H1 (cell line): ENCODE measurements at regions of chr11 and their contacts with region 1.

Region 1: DNA sequence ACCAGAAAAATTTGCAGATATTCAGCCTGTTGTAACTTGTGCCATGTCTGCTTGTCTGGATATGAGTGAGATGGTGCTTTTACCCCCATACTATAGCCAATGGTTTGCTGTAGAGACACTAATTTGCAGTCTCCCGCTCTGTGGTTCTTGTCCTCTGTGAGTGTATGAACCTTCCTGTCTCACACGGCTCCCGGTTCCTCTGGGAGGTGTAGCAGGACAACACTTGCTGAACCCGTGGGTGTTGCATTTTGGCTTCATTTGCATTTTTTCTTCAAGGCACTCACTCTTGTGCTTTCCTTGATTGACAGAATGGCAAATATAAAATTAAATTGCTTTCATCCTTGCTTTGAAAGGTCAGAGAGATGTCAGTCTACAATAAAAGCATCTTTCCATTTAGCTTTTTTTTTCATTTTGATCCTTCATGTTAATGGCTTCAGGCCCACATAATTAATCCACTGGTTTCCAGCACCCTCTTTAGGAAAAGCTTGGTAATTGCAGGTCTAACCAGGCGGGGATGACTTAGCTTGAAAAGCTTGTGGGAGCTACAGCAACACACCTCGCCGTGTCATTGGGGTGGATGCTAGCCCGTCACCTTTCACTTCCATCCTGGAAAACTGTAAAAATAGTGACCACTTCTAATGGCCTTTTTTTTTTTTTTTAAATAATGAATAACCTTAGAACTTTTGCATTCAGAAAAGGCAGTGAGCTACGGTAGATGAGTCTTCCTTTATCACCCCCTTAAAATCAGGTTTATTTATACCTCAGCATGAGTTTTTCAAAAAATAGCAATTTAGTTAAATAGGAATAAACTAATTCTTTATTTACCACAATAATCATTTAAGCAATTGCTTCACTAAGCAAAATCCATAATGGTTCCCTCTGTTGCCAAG is 27.4 kb upstream of the ST14 start:
- DNase-seq: peak; percentile 17 to 63
- H3K4me3 ChIP-seq: 0 out of 8 replicates have a peak overlapping the region, but pooled peaks of 1 of the 4 experiments have one; percentile 19
- H3K27ac ChIP-seq: no peak overlapping the region
- H3K4me1 ChIP-seq: no peaks in the 10 kb centered on the region
- H3K27me3 ChIP-seq: no peaks in the 10 kb centered on the region
- CTCF ChIP-seq: peak; percentile 19 to 83 (median 72)
- EP300 ChIP-seq: no peak
- POLR2A ChIP-seq: no peak
- RAD21 ChIP-seq: peak; percentile 91

Region 2: GRCh38 chr11:129922674-129923073 is 209.5 kb before region 1 on chr11:
- CTCF ChIA-PET with region 1: interaction called, 64 read pairs
- POLR2A ChIA-PET with region 1: no interaction called
- DNase-seq: no peak
- H3K4me3 ChIP-seq: no peak overlapping the region
- H3K27ac ChIP-seq: no peak overlapping the region
- H3K4me1 ChIP-seq: peaks cover 0 to 4% (median 2%) of the 10 kb centered on the region in 4 experiments; a peak in 2 of 7 replicates
- H3K27me3 ChIP-seq: no peaks in the 10 kb centered on the region
- CTCF ChIP-seq: no peak
- EP300 ChIP-seq: no peak
- POLR2A ChIP-seq: no peak
- RAD21 ChIP-seq: no peak

Region 3: GRCh38 chr11:129937592-129938238 is 194.5 kb before region 1 on chr11:
- CTCF ChIA-PET with region 1: interaction called, 15 read pairs
- POLR2A ChIA-PET with region 1: no interaction called
- DNase-seq: no peak
- H3K4me3 ChIP-seq: no peak overlapping the region
- H3K27ac ChIP-seq: no peak overlapping the region
- H3K4me1 ChIP-seq: peaks cover 0 to 11% (median 6%) of the 10 kb centered on the region in 4 experiments; a peak in 6 of 7 replicates
- H3K27me3 ChIP-seq: no peaks in the 10 kb centered on the region
- CTCF ChIP-seq: no peak
- EP300 ChIP-seq: no peak
- POLR2A ChIP-seq: no peak
- RAD21 ChIP-seq: no peak

Region 4: GRCh38 chr11:129992161-129992944 is 139.9 kb before region 1 on chr11:
- CTCF ChIA-PET with region 1: interaction called, 32 read pairs
- POLR2A ChIA-PET with region 1: interaction called, 3 read pairs
- DNase-seq: peak in 1 of 2 experiments; percentile 56
- H3K4me3 ChIP-seq: no peak overlapping the region
- H3K27ac ChIP-seq: no peak overlapping the region
- H3K4me1 ChIP-seq: peaks cover 0 to 2% (median 0%) of the 10 kb centered on the region in 4 experiments; a peak in 2 of 7 replicates
- H3K27me3 ChIP-seq: peaks cover 0 to 2% (median 0%) of the 10 kb centered on the region in 4 experiments; a peak in 1 of 7 replicates
- CTCF ChIP-seq: peak; percentile 68 to 80 (median 69)
- EP300 ChIP-seq: no peak
- POLR2A ChIP-seq: no peak
- RAD21 ChIP-seq: peak; percentile 72 to 77

Region 5: DNA sequence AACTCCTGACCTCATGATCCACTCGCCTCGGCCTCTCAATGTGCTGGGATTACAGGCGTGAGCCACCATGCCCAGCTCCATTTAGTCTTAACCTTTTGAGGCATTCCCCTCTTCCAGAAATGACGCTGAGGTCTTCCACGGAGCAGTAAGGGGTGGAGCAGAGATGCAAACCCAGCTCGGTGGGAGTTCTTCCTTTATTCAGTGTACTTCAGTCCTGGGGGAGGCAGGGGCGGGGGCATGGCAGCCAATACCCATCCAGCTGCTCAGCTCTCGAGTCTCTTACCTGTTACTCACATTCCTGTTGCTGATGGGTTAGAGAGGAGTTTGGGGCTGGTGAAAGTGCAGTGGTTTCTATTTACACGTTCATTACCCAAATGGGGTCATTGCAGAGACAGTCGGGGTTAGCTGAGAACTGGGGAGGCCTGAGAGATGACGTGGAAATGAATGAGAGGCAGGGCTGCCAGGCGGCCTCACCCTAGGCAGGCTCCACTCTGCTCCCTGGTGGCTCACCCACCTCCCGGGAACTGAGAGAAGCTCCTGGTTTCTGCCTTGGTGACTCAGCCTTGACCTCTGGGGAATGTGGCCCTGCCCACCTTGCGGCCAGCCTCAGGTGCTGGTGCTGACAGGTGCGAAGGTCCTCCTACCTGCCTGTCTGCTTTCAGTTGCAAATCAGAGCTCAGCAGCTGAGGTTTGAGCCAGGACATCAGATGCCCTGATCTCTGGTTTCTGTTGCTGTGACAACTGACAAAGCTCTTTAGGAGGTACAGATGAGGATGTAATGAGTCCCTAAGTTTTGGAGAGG is 14.0 kb after region 1 on chr11:
- CTCF ChIA-PET with region 1: interaction called, 60 read pairs
- POLR2A ChIA-PET with region 1: interaction called, 10 read pairs
- DNase-seq: peak; percentile 85 to 87
- H3K4me3 ChIP-seq: peak overlapping the region in 1 of 4 experiments; percentile 26; a peak in 1 of 8 replicates
- H3K27ac ChIP-seq: peak overlapping the region; percentile 41; the same call in 1 of the 2 replicates
- H3K4me1 ChIP-seq: peaks cover 0 to 15% (median 7%) of the 10 kb centered on the region in 4 experiments; a peak in 5 of 7 replicates
- H3K27me3 ChIP-seq: no peaks in the 10 kb centered on the region
- CTCF ChIP-seq: peak; percentile 42 to 72 (median 51)
- EP300 ChIP-seq: peak in 1 of 2 experiments; percentile 80; a peak in 1 of 3 replicates
- POLR2A ChIP-seq: peak in 1 of 2 experiments; percentile 56; a peak in 1 of 3 replicates
- RAD21 ChIP-seq: peak; percentile 50 to 56